ENCODE measurements at regions of chr17 and their contacts with region 1.

Region 1: DNA sequence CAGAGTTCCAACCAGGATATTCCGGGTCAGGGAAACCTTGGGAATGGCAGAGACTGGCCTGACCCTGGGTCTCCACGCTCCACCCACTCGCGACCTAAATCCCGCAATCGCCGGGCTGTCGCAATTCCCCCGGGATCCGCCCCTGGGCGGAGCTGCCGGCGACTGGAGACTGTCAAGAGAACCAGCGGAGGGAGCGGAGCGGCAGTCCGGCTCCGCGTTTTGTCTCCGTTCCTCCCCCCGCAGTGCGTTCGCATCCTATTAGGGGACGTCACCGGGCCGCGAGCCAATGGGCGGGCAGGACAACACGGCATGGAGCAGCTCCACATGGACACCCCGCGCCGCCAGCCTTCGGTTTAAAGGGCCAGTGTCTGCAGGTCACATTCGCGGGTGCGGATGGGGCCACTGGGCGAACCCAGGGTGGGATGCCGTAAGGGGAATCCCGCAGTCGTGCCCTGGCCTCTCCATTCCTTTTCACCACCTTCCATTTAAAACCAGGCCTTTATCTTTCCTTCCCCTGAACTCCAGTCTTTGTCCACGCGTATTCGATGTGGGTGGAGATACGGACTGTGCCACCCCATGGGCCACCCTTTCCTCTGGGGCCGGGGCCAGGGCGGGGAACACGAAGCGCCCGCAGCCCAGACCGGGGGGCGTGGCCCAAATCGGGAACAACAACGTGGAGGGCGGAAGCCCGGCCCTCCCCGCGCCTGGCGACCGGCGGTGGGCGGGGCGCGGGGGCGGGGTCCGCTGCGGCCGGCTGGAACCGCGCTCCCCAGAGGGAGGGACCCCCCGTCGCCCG is 764 bp upstream of the MNT start:
- DNase-seq: peak; percentile 97 to 100
- H3K4me3 ChIP-seq: peak overlapping the region; percentile 96
- H3K27ac ChIP-seq: peak overlapping the region; percentile 96
- H3K4me1 ChIP-seq: peaks cover 65% of the 10 kb centered on the region
- H3K27me3 ChIP-seq: no peaks in the 10 kb centered on the region
- CTCF ChIP-seq: no peak

Region 2: DNA sequence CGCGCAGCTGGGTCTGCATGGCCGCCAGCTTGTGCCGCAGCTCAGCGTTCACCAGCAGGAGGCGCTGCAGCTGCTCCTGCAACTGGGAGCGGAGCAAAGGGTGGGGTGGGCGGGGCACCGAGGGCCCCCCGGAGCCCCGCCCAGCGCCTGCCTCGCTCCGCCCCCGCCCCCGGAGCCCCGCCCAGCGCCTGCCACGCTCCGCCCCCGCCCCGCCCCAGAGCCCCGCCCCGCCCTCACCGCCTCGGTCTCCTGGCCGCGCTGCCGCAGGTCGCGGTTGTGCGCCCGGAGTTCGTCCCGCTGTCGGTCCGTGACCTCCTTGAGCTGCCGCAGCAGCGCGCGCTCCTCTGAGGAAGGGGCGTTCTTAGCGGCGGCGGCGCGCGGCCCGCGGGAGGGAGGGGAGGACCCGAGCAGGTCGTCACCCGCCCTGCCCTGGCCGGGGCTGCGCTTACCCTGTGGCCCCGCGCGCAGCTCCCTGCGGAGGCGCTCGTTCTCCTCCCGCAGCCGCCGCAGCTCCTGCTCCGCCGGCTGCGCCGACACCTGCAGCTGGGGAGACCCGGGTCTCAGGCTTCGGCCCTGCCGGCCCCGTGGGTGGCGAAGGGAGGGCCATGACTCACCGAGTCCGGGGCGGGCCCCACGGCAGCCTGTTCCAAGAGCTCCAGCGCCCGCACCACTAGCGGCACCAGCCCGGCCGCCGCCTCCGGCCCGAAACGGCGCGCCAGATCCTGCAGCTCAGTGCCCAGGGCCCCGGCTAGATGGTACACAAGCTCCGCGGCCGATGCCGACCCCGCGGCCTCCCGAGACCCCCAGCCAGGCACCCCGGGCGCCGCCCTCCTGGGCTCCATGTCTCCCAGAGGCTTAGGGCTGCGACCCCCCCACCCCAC is 752.4 kb before region 1 on chr17:
- CTCF ChIA-PET with region 1: no interaction called
- POLR2A ChIA-PET with region 1: no interaction called
- intact Hi-C with region 1: loop called (anchors 10 kb)
- DNase-seq: peak; percentile 79 to 98
- H3K4me3 ChIP-seq: peak overlapping the region; percentile 79
- H3K27ac ChIP-seq: peak overlapping the region; percentile 75
- H3K4me1 ChIP-seq: peaks cover 31% of the 10 kb centered on the region
- H3K27me3 ChIP-seq: no peaks in the 10 kb centered on the region
- CTCF ChIP-seq: no peak; the same call in none of the 2 replicates

Region 3: DNA sequence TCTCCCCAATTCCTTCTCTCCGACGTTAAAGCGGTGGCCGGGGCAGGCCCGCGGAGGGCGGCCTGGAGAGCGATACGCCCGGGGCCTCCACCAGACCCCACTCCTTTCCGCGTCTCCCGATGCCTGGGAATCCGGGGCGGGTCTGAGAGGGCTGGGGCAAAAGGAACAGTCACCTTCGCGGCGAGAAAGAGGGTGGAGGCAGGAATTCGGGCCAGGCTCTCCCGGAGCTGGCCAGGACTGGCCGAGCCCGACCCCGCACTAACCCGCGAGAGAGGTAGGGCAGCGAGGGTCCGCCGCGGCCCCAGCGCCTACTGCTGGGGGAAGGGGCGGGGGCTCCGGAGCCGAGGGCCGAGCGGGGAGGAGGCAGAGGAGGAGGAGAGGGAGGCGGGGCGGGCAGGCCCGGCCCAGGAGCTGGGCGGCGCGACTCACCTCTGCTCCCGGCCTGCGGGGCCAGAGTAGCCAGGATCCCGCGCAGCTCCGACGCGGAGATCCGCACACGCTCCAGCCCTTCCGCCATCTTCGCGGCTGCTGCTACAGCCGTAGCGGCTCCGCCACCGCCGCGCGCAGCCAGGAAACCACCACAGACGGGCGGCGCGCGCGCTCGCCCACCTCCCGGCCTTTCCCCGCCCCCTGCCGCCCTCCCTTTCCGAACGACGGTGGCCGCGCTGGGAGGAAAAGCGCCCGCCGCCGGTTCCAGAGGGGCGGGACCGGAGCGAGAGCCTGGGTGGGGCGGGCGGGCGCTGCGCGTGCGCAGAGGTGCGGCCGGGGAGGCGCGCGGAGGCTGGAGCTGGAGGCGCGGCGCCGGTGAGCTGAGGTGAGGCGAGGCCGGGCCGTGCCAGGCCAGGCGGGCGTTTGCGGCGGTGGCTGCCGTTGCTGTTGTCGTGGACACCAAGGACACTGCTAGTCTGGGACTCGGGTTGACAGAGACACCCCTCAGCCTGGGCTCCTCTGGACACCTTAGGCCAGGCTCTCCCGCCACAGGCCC is 98.1 kb before region 1 on chr17 and contains the starts of genes SMG6 and SRR:
- CTCF ChIA-PET with region 1: no interaction called
- POLR2A ChIA-PET with region 1: interaction called, 7 read pairs
- intact Hi-C with region 1: loop called (anchors 5 kb)
- DNase-seq: peak; percentile 63 to 91
- H3K4me3 ChIP-seq: peak within 1 kb of the TSS; percentile 94
- H3K27ac ChIP-seq: peak within 1 kb of the TSS; percentile 53
- H3K4me1 ChIP-seq: peaks cover 17% of the 10 kb centered on the region
- H3K27me3 ChIP-seq: no peaks in the 10 kb centered on the region
- CTCF ChIP-seq: no peak
- total RNA-seq, gene SMG6: 43.1 and 49.4 TPM in 2 replicates
- total RNA-seq, gene SRR: 41.8 and 52.3 TPM in 2 replicates

Region 4: GRCh38 chr17:2357931-2358434 is 43.6 kb before region 1 on chr17:
- CTCF ChIA-PET with region 1: interaction called, 3 read pairs
- POLR2A ChIA-PET with region 1: interaction called, 6 read pairs
- intact Hi-C with region 1: loop called (anchors 1 kb)
- DNase-seq: no peak
- H3K4me3 ChIP-seq: no peak overlapping the region
- H3K27ac ChIP-seq: peak overlapping the region; percentile 89
- H3K4me1 ChIP-seq: peaks cover 50% of the 10 kb centered on the region
- H3K27me3 ChIP-seq: no peaks in the 10 kb centered on the region
- CTCF ChIP-seq: no peak

Region 5: GRCh38 chr17:2416010-2416734 is 14.5 kb after region 1 on chr17:
- CTCF ChIA-PET with region 1: interaction called, 10 read pairs
- POLR2A ChIA-PET with region 1: interaction called, 20 read pairs
- intact Hi-C with region 1: no loop called
- DNase-seq: peak; percentile 69 to 91
- H3K4me3 ChIP-seq: no peak overlapping the region
- H3K27ac ChIP-seq: peak overlapping the region; percentile 20; the same call in 1 of the 2 replicates
- H3K4me1 ChIP-seq: peaks cover 4% of the 10 kb centered on the region; the same call in 1 of the 2 replicates
- H3K27me3 ChIP-seq: no peaks in the 10 kb centered on the region
- CTCF ChIP-seq: peak; percentile 98

Region 6: DNA sequence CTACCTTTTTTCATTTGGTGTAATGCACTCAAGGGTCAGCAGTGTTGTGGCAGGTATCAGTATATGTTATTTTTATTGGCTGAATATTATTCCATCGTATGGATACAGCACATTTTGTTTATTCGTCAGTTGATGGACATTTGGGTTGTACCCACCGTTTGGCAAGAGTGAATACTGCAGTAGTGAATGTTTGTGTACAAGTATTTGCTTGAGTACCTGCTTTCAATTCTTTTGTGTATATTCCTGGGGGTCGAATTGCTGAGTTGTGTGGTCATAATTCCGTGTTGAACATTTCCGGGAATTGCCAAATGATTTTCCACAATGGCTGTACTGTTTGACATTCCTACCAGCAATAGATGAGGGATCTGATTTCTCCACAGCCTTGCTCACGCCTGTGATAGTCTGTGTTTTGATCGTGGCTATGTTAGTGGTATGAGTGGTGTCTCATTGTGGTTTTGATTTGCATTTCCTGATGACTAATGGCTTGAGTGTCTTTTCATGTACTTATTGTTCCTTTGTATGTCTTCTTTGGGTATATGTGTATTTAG is 553.3 kb after region 1 on chr17:
- CTCF ChIA-PET with region 1: no interaction called
- POLR2A ChIA-PET with region 1: no interaction called
- intact Hi-C with region 1: loop called (anchors 5 kb)
- DNase-seq: peak; percentile 80 to 99
- H3K4me3 ChIP-seq: no peak overlapping the region
- H3K27ac ChIP-seq: peak overlapping the region; percentile 77
- H3K4me1 ChIP-seq: peaks cover 47% of the 10 kb centered on the region
- H3K27me3 ChIP-seq: no peaks in the 10 kb centered on the region
- CTCF ChIP-seq: no peak